Lower leg skin (tissue), 4 donors: ENCODE measurements at regions of chrX and their contacts with region 1.

Region 1: DNA sequence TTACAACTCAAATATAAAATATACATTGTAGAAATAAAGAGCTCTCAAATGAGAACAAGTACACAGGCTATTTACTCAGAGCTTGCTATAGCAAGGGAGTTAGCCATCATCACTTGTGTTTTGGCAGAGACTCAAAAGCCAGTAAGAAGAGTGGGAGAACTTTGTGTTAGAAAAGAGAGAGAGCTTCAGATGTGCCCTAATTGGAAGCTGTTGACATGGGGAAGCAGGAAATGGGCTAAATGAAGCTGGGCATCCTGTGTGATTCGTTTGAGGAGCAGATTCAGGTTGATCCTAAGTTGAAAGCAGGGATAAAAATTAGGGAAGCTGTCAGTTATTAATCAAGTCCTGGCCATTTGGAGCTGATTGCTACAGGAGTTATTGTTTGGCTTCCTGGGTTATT is 207.4 kb upstream of the MAOA start:
- DNase-seq: no peak
- H3K4me3 ChIP-seq: no peak overlapping the region
- CTCF ChIP-seq: no peak
- POLR2A ChIP-seq: no peak

Region 2: DNA sequence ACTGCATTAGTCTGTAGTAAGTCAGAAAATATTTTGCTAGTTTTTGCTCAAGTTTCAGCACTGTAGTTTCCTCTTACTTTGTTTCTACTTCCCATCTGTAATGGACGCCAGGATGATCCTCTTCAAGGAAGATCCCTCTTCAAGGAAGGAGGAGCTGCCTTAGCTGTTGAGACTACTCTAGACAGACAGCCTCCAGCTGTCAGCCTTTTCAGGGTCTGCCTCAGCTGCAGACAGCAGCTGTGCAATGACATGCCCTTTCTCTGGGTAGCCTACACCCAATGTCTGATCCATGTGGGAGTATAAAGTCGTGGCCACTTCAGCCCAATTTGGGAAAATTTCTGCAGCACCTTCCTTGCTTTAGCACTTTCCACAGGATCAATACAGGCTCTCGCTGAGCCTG is 73.6 kb before region 1 on chrX:
- intact Hi-C with region 1: loop called (anchors 2 kb)
- DNase-seq: no peak
- H3K4me3 ChIP-seq: no peak overlapping the region
- CTCF ChIP-seq: no peak
- POLR2A ChIP-seq: no peak

Region 3: DNA sequence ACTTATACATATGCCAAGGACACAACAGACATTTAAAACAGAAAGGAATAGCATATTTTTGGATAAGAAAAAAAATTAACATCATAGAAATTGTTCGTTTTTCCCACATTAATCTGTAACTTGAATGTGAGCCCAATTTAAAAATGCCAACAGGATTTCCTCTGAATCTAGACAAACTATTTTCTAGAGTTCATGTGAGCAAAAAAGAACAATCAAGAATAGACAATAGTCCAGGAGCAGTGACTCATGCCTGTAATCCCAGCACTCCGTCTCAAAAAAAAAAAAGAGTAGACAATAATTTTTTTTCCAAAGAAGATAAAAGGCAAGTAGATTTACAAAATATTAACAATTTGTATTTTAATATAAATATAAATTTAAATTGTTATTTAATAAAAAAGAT is 1321.4 kb after region 1 on chrX:
- intact Hi-C with region 1: no loop called
- DNase-seq: no peak
- H3K4me3 ChIP-seq: no peak overlapping the region
- CTCF ChIP-seq: no peak
- POLR2A ChIP-seq: no peak